Mammary epithelial cell (primary cell): ENCODE measurements at regions of chr17 and their contacts with region 1.

Region 1: GRCh38 chr17:74457146-74457819 is 9.2 kb upstream of the CD300A start:
- DNase-seq: peak; percentile 17
- H3K4me3 ChIP-seq: no peak overlapping the region
- H3K27ac ChIP-seq: no peak overlapping the region
- H3K4me1 ChIP-seq: peaks cover 9% of the 10 kb centered on the region
- H3K27me3 ChIP-seq: no peaks in the 10 kb centered on the region
- CTCF ChIP-seq: peak; percentile 84 to 92

Region 2: DNA sequence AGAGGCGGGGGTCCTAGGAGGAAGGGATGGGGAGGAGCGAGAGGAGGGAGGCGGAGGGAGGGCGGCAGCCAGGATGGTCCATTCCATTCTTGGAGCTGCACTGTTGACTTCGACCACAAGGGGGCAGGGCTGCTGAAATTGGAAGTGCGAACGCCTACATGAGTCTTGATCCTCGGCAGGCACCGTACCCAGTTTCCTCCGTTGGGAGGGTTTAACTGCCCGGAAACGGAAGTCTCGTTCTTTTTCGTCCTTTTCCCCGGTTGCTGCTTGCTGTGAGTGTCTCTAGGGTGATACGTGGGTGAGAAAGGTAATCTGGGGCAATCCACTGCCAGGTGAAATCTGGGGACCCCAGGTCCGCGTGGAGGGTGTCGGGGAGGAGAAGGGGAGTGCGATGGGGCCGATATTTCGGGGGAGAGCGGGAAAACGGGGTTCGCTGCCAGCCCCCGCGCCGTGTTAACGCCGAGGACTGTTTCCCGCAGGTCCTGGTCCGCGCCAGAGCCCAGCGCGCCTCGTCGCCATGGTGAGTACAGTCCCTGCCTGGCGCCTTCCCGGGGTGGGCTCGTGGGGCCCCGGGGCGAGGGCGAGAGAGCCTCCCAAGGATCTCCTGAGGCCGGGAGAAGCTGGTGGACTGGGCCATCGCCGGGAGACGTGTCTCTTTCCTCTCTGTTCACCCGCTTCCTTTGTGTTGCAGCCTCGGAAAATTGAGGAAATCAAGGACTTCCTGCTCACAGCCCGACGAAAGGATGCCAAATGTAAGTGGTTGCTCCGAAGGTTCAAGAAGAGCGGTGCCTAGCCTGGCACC is 253.6 kb before region 1 on chr17 and contains the start of gene RPL38:
- CTCF ChIA-PET with region 1: no interaction called
- dilution Hi-C with region 1: no loop called
- in situ Hi-C with region 1: no loop called
- intact Hi-C with region 1: loop called (anchors 1 kb)
- DNase-seq: peak; percentile 91
- H3K4me3 ChIP-seq: peak within 1 kb of the TSS; percentile 76 to 93 (median 86)
- H3K27ac ChIP-seq: peak within 1 kb of the TSS; percentile 80
- H3K4me1 ChIP-seq: peaks cover 30% of the 10 kb centered on the region
- H3K27me3 ChIP-seq: peaks cover 3% of the 10 kb centered on the region
- CTCF ChIP-seq: peak; percentile 95 to 97
- total RNA-seq, gene RPL38: 487 to 802 TPM

Region 3: GRCh38 chr17:74368092-74369081 is 88.9 kb before region 1 on chr17:
- CTCF ChIA-PET with region 1: no interaction called
- dilution Hi-C with region 1: no loop called
- in situ Hi-C with region 1: no loop called
- intact Hi-C with region 1: loop called (anchors 1 kb)
- DNase-seq: peak; percentile 45
- H3K4me3 ChIP-seq: no peak overlapping the region
- H3K27ac ChIP-seq: no peak overlapping the region
- H3K4me1 ChIP-seq: no peaks in the 10 kb centered on the region
- H3K27me3 ChIP-seq: peaks cover 1% of the 10 kb centered on the region
- CTCF ChIP-seq: peak; percentile 85 to 96

Region 4: GRCh38 chr17:74408262-74408661 is 49.0 kb before region 1 on chr17:
- CTCF ChIA-PET with region 1: interaction called, 11 read pairs
- dilution Hi-C with region 1: no loop called
- in situ Hi-C with region 1: no loop called
- intact Hi-C with region 1: no loop called
- DNase-seq: peak; percentile 18
- H3K4me3 ChIP-seq: no peak overlapping the region
- H3K27ac ChIP-seq: no peak overlapping the region
- H3K4me1 ChIP-seq: no peaks in the 10 kb centered on the region
- H3K27me3 ChIP-seq: no peaks in the 10 kb centered on the region
- CTCF ChIP-seq: no peak

Region 5: DNA sequence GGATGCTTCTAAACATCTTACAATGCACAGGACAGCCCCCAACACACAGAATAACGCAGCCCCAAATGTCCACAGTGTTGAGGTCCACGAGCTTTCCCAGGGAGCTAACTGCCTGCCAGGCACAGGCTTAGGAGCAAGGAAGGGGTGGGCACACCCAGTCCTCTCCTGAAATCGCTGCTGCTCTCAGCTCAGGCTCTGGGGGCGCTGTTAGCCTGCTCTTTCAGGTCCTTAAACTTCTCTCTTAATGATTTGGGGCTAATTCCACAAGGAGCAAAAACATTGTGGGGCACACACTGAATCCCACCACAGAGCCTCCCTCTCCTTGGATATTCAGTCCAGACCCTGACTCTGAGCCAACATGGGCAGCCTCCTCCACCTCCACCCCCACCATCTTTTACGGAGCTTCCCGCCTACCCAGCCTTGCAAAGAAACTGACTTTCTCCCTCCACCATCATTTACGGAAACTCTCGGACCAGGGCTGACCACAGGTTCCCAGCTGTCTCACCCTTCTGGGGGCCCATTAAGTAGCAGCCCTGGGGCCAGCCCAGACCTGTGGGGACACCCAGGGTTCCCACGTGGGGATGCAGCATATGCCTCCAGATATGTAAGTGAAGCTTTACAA is 109.0 kb after region 1 on chr17:
- CTCF ChIA-PET with region 1: no interaction called
- dilution Hi-C with region 1: no loop called
- in situ Hi-C with region 1: no loop called
- intact Hi-C with region 1: no loop called
- DNase-seq: peak; percentile 25
- H3K4me3 ChIP-seq: no peak overlapping the region
- H3K27ac ChIP-seq: no peak overlapping the region
- H3K4me1 ChIP-seq: peaks cover 14% of the 10 kb centered on the region
- H3K27me3 ChIP-seq: no peaks in the 10 kb centered on the region
- CTCF ChIP-seq: peak; percentile 53 to 75

Region 6: DNA sequence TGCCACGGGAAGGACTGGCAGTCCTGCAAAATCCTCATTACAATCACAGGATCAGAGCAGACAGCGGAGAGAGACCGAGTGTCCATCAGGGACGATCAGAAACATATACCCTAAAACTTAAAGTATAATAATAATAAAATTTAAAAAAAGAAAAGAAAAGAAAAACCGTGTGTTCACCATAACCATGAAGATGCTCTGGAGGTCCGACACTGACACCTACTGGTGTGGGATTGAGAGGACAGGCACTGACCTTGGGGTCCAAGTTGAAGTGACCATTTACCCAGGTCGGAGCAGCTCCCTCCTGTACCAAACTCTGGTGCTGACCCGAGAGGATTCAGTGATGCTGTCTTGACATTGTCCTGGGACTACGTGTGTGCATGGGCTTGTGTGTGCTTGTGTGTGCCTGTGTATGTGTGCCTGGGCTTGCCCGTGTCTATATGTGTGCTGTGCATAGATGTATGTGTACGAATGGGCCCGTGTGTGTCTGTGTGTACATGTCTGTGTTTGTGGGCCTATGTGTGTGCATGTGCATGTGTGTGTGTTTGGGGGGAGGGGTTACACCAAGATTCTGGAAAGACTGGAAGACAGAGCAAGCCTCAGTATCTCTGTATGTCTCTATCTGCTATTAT is 144.8 kb after region 1 on chr17:
- CTCF ChIA-PET with region 1: interaction called, 3 read pairs
- dilution Hi-C with region 1: no loop called
- in situ Hi-C with region 1: no loop called
- intact Hi-C with region 1: loop called (anchors 2 kb)
- DNase-seq: peak; percentile 28
- H3K4me3 ChIP-seq: no peak overlapping the region
- H3K27ac ChIP-seq: no peak overlapping the region
- H3K4me1 ChIP-seq: peaks cover 13% of the 10 kb centered on the region
- H3K27me3 ChIP-seq: no peaks in the 10 kb centered on the region
- CTCF ChIP-seq: peak; percentile 73 to 76